ENCODE measurements at regions of chr10 and their contacts with region 1.

Region 1: DNA sequence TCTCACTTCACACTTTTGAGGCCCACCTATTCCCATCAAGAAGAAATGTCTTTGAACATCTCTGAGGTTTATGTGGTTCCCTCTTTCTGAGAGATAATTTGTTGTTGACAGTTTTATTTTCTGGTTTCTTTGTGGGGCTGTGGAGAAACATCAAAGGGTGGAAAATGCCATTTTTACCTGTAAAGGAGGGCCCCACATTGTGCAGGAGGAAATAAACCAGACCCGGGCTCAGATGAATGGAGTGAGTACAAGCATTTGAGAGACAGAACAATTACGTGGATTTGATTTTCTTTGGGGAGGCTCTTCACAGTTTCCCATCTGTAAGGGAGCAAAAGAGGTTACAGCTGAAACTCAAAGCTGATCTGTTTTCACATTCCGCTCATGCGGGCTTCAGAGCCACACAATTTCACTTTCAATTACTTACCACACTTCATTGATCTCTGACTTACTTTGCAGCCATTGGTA is 29.8 kb downstream of the ITPRIP start:
- DNase-seq: no peak
- ATAC-seq: no peak
- H3K4me3 ChIP-seq: no peak overlapping the region
- H3K27ac ChIP-seq: no peak overlapping the region
- H3K4me1 ChIP-seq: peaks cover 0 to 9% (median 2%) of the 10 kb centered on the region in 4 donors
- H3K27me3 ChIP-seq: no peaks in the 10 kb centered on the region
- CTCF ChIP-seq: no peak
- POLR2A ChIP-seq: no peak

Region 2: GRCh38 chr10:104231784-104232612 is 76.5 kb before region 1 on chr10 and contains the start of gene CFAP43:
- intact Hi-C with region 1: no loop called
- DNase-seq: peak; percentile 99
- ATAC-seq: peak; percentile 99 to 100 (median 99)
- H3K4me3 ChIP-seq: peak within 1 kb of the TSS; percentile 85 to 90 (median 89)
- H3K27ac ChIP-seq: peak within 1 kb of the TSS in 2 of 3 donors; percentile 52 to 64
- H3K4me1 ChIP-seq: peaks cover 0 to 5% (median 0%) of the 10 kb centered on the region in 4 donors
- H3K27me3 ChIP-seq: no peaks in the 10 kb centered on the region
- CTCF ChIP-seq: no peak
- POLR2A ChIP-seq: no peak
- total RNA-seq, gene CFAP43: 0.11 to 0.34 (median 0.20) TPM in 5 of 6 experiments, not detected in the other

Region 3: GRCh38 chr10:104349623-104350126 is 41.2 kb after region 1 on chr10:
- intact Hi-C with region 1: loop called (anchors 5 kb)
- DNase-seq: no peak
- ATAC-seq: peak; percentile 72 to 79 (median 77)
- H3K4me3 ChIP-seq: peak overlapping the region in 1 of 3 donors; percentile 6
- H3K27ac ChIP-seq: peak overlapping the region; percentile 66 to 74 (median 67)
- H3K4me1 ChIP-seq: peaks cover 0 to 15% (median 6%) of the 10 kb centered on the region in 4 donors
- H3K27me3 ChIP-seq: no peaks in the 10 kb centered on the region
- CTCF ChIP-seq: no peak
- POLR2A ChIP-seq: no peak

Measured in right lobe of liver (tissue), 6 donors.